T-cell (primary cell): ENCODE measurements at regions of chr4 and their contacts with region 1.

Region 1: GRCh38 chr4:183261953-183262775 is 57.9 kb downstream of the CLDN22 start:
- DNase-seq: peak; percentile 30 to 79 (median 63)
- ATAC-seq: peak; percentile 87 to 93 (median 90)
- H3K4me3 ChIP-seq: no peak overlapping the region
- H3K4me3 Mint-ChIP-seq: no peak overlapping the region
- H3K27ac ChIP-seq: peak overlapping the region; percentile 34
- H3K27ac Mint-ChIP-seq: peak overlapping the region; percentile 81 to 87
- H3K4me1 ChIP-seq: peaks cover 3 to 5% of the 10 kb centered on the region in 2 experiments
- H3K4me1 Mint-ChIP-seq: peaks cover 6 to 10% (median 7%) of the 10 kb centered on the region in 3 donors
- H3K27me3 ChIP-seq: peaks cover 0 to 3% of the 10 kb centered on the region in 2 experiments
- H3K27me3 Mint-ChIP-seq: no peaks in the 10 kb centered on the region

Region 2: GRCh38 chr4:183249857-183250256 is 12.3 kb before region 1 on chr4:
- CTCF ChIA-PET with region 1: interaction called, 15 to 16 read pairs
- POLR2A ChIA-PET with region 1: no interaction called
- DNase-seq: peak in 2 of 35 experiments; percentile 1 to 33
- ATAC-seq: no peak
- H3K4me3 ChIP-seq: no peak overlapping the region
- H3K4me3 Mint-ChIP-seq: no peak overlapping the region
- H3K27ac ChIP-seq: no peak overlapping the region
- H3K27ac Mint-ChIP-seq: no peak overlapping the region
- H3K4me1 ChIP-seq: no peaks in the 10 kb centered on the region
- H3K4me1 Mint-ChIP-seq: no peaks in the 10 kb centered on the region
- H3K27me3 ChIP-seq: no peaks in the 10 kb centered on the region
- H3K27me3 Mint-ChIP-seq: no peaks in the 10 kb centered on the region

Region 3: GRCh38 chr4:183541010-183541751 is 279.0 kb after region 1 on chr4:
- CTCF ChIA-PET with region 1: no interaction called
- POLR2A ChIA-PET with region 1: no interaction called
- DNase-seq: no peak
- ATAC-seq: no peak
- H3K4me3 ChIP-seq: no peak overlapping the region
- H3K4me3 Mint-ChIP-seq: no peak overlapping the region
- H3K27ac ChIP-seq: no peak overlapping the region
- H3K27ac Mint-ChIP-seq: no peak overlapping the region
- H3K4me1 ChIP-seq: no peaks in the 10 kb centered on the region
- H3K4me1 Mint-ChIP-seq: no peaks in the 10 kb centered on the region
- H3K27me3 ChIP-seq: peaks cover 0 to 29% of the 10 kb centered on the region in 2 experiments
- H3K27me3 Mint-ChIP-seq: peaks cover 14 to 32% of the 10 kb centered on the region in 2 donors